GM10248 (cell line): ENCODE measurements at regions of chr6 and their contacts with region 1.

Region 1: DNA sequence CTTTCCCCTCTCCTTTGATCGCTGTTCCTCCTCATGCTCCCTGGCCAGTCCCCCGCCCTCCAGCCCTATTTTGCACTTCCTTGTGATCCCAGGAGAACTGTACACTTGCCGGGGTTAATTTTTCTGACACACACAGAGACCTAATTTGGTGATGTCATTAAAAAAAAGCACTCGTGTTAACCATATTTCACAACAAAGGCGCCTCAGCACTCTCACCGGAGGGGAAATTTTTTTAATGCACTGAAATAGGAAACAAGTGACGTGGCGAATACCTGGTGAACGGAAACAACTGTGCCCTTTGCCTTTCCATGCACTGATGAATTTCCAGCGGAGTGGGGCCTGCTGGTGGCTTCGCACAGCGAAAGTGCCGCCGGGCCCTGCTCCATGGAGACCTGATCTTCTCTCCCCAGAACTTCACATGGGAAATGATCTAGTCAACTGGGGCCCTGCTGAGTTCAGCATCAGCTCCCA is 53.9 kb upstream of the TAGAP start:
- DNase-seq: peak; percentile 48
- CTCF ChIP-seq: no peak

Region 2: DNA sequence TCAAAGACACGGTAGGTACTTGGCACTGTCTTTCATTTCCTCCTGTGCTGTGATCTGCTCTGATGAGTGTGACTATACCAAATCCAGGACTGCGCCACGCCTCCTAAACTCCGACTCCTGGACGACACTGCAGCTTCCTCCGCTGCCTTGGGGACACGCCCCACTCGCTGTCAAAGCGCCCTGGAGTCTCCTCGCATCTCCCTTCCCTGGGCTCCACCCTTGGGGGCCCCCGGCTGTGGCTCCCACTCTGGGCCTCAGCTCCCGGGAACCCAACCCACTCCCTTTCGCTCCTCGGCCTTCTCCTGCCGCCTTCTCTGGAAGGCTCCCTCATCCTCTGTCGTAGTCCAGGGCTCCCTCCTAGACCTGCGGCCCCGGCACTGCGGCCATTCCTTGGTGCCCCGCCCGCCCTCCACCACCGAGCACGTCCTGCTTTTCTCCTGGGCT is 159.8 kb before region 1 on chr6:
- CTCF ChIA-PET with region 1: no interaction called
- POLR2A ChIA-PET with region 1: no interaction called
- DNase-seq: no peak
- CTCF ChIP-seq: no peak

Region 3: DNA sequence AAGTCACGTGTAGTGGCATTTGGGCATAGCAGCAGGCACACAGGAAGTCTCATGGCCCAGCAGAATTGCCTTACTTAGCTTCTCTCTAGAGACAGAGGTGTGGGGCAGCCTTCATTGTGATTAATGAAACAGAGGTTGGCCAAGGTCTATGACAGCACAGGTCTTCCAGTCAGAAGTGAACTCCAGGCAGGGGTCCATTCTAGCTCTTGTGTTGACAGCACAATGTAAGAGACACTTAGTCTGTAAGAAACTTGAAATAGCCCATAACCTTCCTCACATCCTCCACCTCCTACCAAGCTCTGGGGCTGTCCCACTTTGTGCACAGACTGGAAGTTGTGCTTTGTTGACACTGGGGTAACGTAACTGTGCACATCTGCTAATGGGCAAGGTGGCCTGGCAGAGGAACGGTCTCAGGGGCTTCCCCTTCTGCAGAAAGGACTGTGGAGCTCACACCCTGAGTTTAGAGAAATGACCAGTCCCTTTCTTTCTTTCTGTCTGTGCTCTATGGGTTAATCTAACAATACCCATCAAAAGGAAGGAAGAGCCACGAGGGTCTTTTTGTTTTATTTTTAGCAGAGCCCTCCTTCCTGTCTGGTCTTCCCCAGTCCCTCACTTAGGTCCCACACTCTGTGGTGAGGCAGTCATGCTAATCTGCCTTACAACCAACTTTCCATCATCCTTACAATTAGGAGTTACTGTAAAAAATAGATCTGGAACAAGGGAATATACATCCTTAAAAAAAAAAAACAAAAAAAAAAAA is 18.3 kb before region 1 on chr6:
- CTCF ChIA-PET with region 1: interaction called, 22 read pairs
- POLR2A ChIA-PET with region 1: no interaction called
- DNase-seq: no peak
- CTCF ChIP-seq: no peak

Region 4: DNA sequence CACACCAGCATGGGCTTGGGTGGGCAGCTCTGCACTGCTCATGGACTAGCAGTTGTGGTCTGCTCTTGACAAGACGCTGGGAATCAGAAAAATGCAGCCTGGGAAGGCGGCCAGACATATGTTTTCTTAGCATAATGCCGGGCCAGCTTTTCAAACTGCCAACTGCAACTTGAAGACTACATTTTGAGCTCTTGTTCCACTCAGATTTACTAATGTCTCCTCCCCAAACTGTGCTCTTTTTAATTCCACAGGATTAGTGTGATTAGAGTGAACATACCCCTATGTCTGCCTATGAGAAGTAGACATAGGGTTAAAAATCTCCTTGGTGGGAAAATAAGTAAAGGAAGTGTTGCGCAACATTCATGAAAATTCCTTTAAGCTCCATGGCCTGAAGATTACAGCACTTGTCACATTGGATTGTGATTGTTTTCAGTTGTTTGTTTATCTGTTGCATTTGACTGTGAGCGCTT is 65.3 kb after region 1 on chr6:
- CTCF ChIA-PET with region 1: no interaction called
- POLR2A ChIA-PET with region 1: no interaction called
- DNase-seq: no peak
- CTCF ChIP-seq: no peak